PC-3 (cell line): ENCODE measurements at regions of chr5 and their contacts with region 1.

Region 1: DNA sequence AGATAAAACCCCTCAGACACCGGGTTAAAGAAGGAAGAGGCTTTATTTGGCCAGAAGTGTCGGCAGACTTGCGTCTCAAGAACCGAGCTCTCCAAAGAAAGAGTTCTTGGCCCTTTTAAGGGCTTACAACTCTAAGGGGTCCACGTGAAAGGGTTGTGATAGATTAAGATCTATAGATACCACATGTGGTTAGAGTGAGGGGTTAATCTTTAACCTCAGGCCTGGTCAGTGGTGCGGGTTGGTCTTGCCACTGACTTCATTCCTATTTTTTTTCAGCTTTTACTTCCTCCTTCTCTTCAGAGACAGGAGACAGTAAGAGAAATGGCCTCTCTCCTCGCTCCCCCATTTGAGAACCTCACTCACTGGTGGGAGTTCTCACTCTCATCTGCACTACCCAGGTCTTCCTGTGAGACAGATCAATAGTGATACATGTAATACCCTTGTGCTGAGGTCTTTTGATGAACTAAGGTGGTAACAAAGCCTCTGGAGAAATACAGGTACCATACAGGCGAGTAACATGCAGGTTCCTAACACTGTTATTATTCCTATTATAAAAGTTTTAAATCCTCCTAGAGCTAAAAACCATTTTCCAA is 52.4 kb upstream of the COX7C start:
- DNase-seq: no peak
- ATAC-seq: no peak
- H3K4me3 ChIP-seq: no peak overlapping the region
- H3K27ac ChIP-seq: no peak overlapping the region
- H3K4me1 ChIP-seq: no peaks in the 10 kb centered on the region
- H3K27me3 ChIP-seq: no peaks in the 10 kb centered on the region
- CTCF ChIP-seq: no peak

Region 2: DNA sequence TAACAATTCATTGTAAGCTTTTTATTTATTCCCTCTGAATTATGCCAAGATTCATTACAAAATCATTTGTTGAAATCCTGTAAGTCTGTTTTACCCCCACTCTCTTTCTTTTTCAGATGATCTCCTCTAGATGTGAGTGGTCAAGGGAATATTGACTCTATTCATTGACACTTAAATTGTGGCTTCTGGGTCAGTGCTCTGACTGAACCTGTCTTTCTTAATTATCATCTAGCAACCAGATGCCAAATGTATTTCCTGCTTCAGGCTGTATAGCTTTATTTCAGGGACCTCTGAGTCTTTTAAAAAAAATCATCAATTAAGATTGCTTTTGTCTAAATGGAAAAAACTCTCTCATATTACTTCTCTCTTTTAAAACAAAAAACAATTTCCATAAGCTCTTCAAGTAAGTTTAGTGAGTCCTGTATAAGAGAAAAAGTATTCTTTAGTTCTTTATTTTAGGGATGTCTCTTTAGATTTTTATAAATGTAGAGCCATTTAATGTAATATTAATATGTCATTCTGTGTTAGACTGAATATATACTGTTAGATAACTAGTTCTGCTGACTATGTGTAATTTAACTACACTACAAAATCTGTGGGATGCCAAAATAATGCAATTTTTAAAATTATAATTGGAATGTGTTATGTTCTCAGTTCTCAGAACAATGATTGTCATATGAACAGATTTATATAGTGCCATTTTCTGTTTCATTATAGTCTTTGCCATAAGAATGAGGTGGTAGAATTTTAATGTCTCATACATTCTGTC is 1534.8 kb before region 1 on chr5:
- CTCF ChIA-PET with region 1: no interaction called
- POLR2A ChIA-PET with region 1: no interaction called
- intact Hi-C with region 1: no loop called
- DNase-seq: no peak
- ATAC-seq: no peak
- H3K4me3 ChIP-seq: no peak overlapping the region
- H3K27ac ChIP-seq: no peak overlapping the region
- H3K4me1 ChIP-seq: no peaks in the 10 kb centered on the region
- H3K27me3 ChIP-seq: peaks cover 9% of the 10 kb centered on the region; the same call in 1 of the 2 replicates
- CTCF ChIP-seq: no peak

Region 3: DNA sequence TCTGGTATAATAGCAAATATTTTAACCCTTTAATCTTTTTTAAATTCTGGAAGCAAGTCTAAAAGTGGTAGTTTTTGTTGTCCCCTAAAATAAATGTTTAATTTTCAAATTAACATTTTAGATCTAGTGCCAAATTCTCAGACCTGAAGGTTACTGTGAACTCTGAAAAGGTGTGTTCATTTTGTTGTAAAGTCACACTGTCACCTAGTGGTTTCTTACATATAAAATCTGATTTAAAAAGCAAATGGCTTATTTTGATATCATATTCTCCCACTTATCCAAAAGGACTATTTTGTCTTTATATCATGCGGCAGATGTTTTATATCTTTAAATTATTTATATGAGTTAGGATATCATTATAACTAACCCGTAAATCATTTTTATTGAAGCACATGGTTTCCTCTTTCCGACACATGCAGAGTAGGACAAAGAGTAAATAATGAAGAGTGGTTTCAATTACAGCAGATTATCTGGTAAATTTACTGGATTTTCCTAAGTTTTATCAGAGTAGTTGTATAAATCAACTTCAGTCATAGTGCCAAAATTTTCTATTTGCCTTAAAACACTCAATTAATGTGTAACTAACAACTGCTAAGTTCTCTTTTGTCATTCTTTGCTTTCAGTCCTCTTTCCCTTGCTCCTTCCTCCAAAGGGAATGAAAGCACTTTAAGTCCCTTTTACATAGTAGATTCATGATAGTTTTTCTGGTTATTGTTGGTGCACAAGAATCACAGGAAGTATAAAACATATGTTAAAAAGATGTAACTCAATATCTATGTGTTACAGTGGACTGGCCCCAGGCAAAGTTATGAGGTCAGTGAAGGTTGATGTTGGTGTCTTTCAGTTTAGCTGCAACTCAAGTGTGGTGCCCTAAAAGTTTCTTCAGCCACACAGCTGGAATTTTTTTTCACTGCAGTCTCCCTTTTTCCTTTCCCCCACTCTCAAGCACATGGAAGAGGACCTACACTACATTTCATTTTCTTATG is 242.0 kb after region 1 on chr5:
- CTCF ChIA-PET with region 1: no interaction called
- POLR2A ChIA-PET with region 1: no interaction called
- intact Hi-C with region 1: loop called (anchors 2 kb)
- DNase-seq: peak; percentile 41
- ATAC-seq: peak; percentile 71
- H3K4me3 ChIP-seq: no peak overlapping the region
- H3K27ac ChIP-seq: no peak overlapping the region
- H3K4me1 ChIP-seq: peaks cover 6% of the 10 kb centered on the region; the same call in 1 of the 2 replicates
- H3K27me3 ChIP-seq: no peaks in the 10 kb centered on the region
- CTCF ChIP-seq: peak; percentile 63

Region 4: DNA sequence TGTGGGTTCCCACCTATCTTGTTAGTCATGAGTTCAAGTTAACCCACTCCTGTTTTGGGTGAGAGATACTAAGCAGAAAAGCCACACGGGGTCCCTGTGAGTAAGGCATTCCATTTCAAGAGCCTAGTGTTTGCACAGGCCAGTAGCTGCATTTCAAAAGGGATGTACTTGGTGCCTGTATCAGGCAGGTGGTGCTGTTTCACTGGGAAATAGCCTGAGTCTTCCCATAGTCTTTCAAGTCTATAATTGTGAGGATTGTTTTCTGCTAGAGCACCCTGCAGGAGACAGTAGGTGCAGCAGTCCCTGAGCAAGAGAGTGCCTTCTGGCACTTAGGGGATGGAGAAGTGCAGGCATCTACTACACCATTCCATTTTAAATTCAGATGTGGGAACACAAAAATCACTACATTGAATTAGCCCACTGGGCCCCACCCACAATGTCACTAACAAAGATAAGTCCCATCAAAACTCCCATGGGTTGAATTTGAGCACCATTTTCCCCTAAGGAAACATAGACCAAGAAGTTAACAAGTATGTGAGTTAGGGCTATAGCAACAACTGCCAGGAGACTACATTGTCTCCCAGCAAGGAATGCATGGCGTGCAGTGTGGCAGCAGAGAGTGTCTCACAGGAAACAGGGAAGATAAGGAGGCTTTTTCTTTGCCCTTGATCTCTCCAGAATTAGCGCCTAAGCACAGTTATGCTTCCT is 315.6 kb after region 1 on chr5:
- CTCF ChIA-PET with region 1: no interaction called
- POLR2A ChIA-PET with region 1: no interaction called
- intact Hi-C with region 1: loop called (anchors 5 kb)
- DNase-seq: peak; percentile 96
- ATAC-seq: peak; percentile 91
- H3K4me3 ChIP-seq: no peak overlapping the region
- H3K27ac ChIP-seq: no peak overlapping the region
- H3K4me1 ChIP-seq: peaks cover 13% of the 10 kb centered on the region; the same call in 1 of the 2 replicates
- H3K27me3 ChIP-seq: no peaks in the 10 kb centered on the region
- CTCF ChIP-seq: peak; percentile 100

Region 5: GRCh38 chr5:86917117-86917579 is 351.9 kb after region 1 on chr5:
- CTCF ChIA-PET with region 1: no interaction called
- POLR2A ChIA-PET with region 1: interaction called, 20 read pairs
- intact Hi-C with region 1: no loop called
- DNase-seq: peak; percentile 70
- ATAC-seq: peak; percentile 67
- H3K4me3 ChIP-seq: no peak overlapping the region
- H3K27ac ChIP-seq: no peak overlapping the region
- H3K4me1 ChIP-seq: no peaks in the 10 kb centered on the region
- H3K27me3 ChIP-seq: no peaks in the 10 kb centered on the region
- CTCF ChIP-seq: no peak